Endothelial cell of umbilical vein (primary cell): ENCODE measurements at regions of chr19 and their contacts with region 1.

Region 1: DNA sequence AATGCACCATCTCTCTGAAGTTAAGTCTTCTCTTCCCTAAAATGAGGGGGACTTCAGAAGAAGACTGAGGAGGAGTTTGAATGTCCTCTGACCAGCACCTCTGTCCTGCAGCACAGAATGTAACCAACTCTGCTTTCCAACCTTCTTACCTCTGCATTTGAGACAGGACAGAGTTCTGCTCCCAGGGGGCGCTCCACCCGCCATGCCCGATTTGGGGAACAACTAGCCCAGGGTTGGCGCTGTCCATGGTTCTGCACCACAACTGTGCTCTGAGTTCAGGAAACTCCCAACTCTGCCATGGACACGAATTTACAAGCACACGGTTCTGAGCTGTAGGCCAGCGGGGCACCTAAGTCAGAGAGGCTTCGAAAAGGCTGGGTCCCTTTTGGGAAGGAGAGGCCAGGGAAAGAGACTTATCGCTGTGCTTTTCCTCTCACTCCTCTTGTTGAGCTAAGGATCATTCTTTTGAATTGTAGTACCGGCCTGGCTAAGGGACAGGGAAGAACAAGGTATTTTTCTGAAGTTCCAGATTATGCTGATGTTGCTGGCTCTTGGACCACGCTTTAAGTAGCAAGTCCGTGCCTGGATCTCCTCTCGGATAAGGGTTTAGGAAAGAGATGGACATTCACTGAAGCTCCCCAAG is 22.2 kb downstream of the SIGLEC5 start:
- DNase-seq: peak; percentile 60
- H3K4me3 ChIP-seq: no peak overlapping the region
- H3K27ac ChIP-seq: no peak overlapping the region
- H3K4me1 ChIP-seq: no peaks in the 10 kb centered on the region
- H3K27me3 ChIP-seq: peaks cover 0 to 1% of the 10 kb centered on the region in 2 experiments
- CTCF ChIP-seq: peak; percentile 82
- POLR2A ChIP-seq: no peak

Region 2: GRCh38 chr19:51552996-51553725 is 54.9 kb before region 1 on chr19:
- CTCF ChIA-PET with region 1: interaction called, 3 read pairs
- POLR2A ChIA-PET with region 1: no interaction called
- dilution Hi-C with region 1: no loop called
- intact Hi-C with region 1: loop called (anchors 1 kb)
- DNase-seq: peak; percentile 48
- H3K4me3 ChIP-seq: no peak overlapping the region
- H3K27ac ChIP-seq: no peak overlapping the region
- H3K4me1 ChIP-seq: peaks cover 5% of the 10 kb centered on the region
- H3K27me3 ChIP-seq: no peaks in the 10 kb centered on the region
- CTCF ChIP-seq: no peak
- POLR2A ChIP-seq: no peak

Region 3: GRCh38 chr19:51654783-51655182 is 46.7 kb after region 1 on chr19:
- CTCF ChIA-PET with region 1: interaction called, 20 read pairs
- POLR2A ChIA-PET with region 1: no interaction called
- dilution Hi-C with region 1: no loop called
- intact Hi-C with region 1: loop called (anchors 5 kb)
- DNase-seq: no peak
- H3K4me3 ChIP-seq: no peak overlapping the region
- H3K27ac ChIP-seq: no peak overlapping the region
- H3K4me1 ChIP-seq: peaks cover 2% of the 10 kb centered on the region
- H3K27me3 ChIP-seq: no peaks in the 10 kb centered on the region
- CTCF ChIP-seq: no peak
- POLR2A ChIP-seq: no peak